Breast epithelium (tissue), 4 donors: ENCODE measurements at regions of chr15 and their contacts with region 1.

Region 1: GRCh38 chr15:66724850-66725824 is 23.1 kb downstream of the SMAD6 start:
- DNase-seq: no peak
- H3K4me3 ChIP-seq: no peak overlapping the region
- H3K27ac ChIP-seq: peak overlapping the region in 1 of 2 donors; percentile 71
- H3K4me1 ChIP-seq: peaks cover 0 to 5% of the 10 kb centered on the region in 2 donors
- H3K27me3 ChIP-seq: no peaks in the 10 kb centered on the region
- CTCF ChIP-seq: no peak
- POLR2A ChIP-seq: no peak

Region 2: GRCh38 chr15:65217526-65218482 is 1507.3 kb before region 1 on chr15:
- intact Hi-C with region 1: no loop called
- DNase-seq: no peak
- H3K4me3 ChIP-seq: no peak overlapping the region
- H3K27ac ChIP-seq: no peak overlapping the region
- H3K4me1 ChIP-seq: no peaks in the 10 kb centered on the region
- H3K27me3 ChIP-seq: no peaks in the 10 kb centered on the region
- CTCF ChIP-seq: no peak
- POLR2A ChIP-seq: no peak

Region 3: GRCh38 chr15:66212563-66212921 is 512.6 kb before region 1 on chr15:
- intact Hi-C with region 1: no loop called
- DNase-seq: peak in 1 of 2 donors; percentile 37
- H3K4me3 ChIP-seq: no peak overlapping the region
- H3K27ac ChIP-seq: no peak overlapping the region
- H3K4me1 ChIP-seq: no peaks in the 10 kb centered on the region
- H3K27me3 ChIP-seq: no peaks in the 10 kb centered on the region
- CTCF ChIP-seq: no peak
- POLR2A ChIP-seq: no peak

Region 4: GRCh38 chr15:66649235-66649984 is 75.7 kb before region 1 on chr15:
- intact Hi-C with region 1: loop called (anchors 2 kb)
- DNase-seq: no peak
- H3K4me3 ChIP-seq: no peak overlapping the region
- H3K27ac ChIP-seq: no peak overlapping the region
- H3K4me1 ChIP-seq: no peaks in the 10 kb centered on the region
- H3K27me3 ChIP-seq: no peaks in the 10 kb centered on the region
- CTCF ChIP-seq: no peak
- POLR2A ChIP-seq: no peak

Region 5: DNA sequence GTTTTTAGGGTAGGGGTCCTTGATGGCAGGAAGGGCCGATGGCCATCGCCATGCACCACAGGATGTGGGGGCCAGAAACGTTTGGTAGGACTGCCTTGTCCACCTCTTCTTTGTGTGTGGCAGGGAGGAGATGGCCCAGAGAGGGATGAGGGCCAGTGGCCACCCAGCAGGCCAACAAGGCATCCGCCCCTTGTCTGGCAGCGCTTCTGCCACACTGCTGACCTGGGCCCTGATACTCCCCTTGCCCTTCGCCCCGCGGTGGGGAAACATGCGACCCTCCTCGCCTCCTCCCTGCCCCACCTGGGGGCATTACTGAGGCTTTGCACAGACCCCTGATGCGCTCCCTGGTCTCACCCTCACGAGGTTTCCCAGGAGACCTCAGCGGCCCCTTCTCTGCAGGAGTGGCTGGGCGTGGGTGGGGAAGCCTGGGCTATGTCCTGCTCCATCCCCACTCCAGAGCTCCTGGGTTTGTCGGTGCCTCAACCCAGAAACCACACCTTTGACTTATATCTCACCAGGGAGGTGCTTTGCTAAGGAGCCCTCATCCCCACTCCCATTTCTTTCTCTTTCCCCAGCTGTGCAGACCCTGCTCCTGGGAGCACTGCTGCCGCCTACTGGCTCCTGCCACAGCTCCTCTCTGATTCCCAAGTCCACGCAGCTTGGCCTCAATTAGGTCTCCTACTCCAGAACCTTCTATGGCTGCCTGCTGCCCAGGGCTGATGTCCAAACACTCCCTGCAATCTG is 1591.1 kb after region 1 on chr15:
- intact Hi-C with region 1: no loop called
- DNase-seq: peak; percentile 14 to 43
- H3K4me3 ChIP-seq: no peak overlapping the region
- H3K27ac ChIP-seq: no peak overlapping the region
- H3K4me1 ChIP-seq: no peaks in the 10 kb centered on the region
- H3K27me3 ChIP-seq: no peaks in the 10 kb centered on the region
- CTCF ChIP-seq: no peak
- POLR2A ChIP-seq: no peak